ENCODE measurements at regions of chr7 and their contacts with region 1.

Region 1: DNA sequence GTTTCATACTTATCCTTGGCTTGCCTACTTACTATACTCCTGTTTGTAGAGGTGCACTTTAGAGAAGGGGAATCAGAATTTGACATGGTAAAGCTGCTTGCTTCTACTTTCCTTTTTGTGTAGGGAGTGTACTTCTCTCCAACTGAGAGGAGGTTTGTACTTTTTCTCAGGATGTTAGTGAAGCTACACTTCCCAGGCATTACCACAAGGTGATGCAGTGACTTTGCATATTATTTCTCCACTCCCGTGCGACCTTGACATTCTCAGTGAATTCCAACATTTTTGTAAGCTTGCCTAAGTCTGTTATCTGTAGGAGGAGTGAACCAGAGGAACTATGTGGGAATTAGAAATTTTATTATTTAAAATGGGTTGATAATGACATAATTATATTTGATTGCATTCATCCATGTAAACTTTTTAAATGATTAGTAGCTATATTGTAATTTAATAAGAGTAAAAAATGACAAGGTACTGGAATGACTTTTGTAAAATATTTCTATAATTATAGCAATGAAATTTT is 5.2 kb downstream of the TAX1BP1 start:
- DNase-seq: peak; percentile 47 to 82
- H3K4me3 ChIP-seq: peak overlapping the region; percentile 25
- H3K27ac ChIP-seq: peak overlapping the region; percentile 65
- H3K4me1 ChIP-seq: peaks cover 42% of the 10 kb centered on the region
- H3K27me3 ChIP-seq: no peaks in the 10 kb centered on the region
- CTCF ChIP-seq: peak; percentile 81

Region 2: DNA sequence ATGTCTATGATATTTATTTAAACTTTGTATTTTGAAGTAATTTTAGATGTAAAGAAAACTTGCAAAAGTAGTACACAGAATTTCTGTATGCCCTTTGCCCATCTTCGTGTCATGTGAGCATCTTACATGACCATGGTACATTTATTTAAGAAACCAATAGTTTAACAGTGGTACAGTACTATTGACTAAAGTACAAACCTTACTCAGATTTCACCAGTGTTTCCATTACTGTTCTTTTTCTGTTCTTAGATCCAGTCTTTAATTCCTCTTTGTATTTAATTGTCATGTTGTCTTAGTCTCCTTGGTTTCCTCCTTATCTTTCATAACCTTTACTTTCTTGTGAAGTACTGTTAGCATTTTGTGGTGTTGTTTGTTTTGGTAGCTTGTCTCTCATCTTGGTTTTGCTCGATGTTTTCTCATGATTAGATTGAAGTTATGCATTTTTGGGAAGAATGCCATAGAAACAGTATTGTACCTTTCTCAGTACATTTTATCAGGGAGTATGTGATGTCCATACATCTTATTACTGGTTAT is 18.9 kb after region 1 on chr7:
- CTCF ChIA-PET with region 1: no interaction called
- POLR2A ChIA-PET with region 1: no interaction called
- intact Hi-C with region 1: loop called (anchors 2 kb)
- DNase-seq: no peak
- H3K4me3 ChIP-seq: no peak overlapping the region
- H3K27ac ChIP-seq: no peak overlapping the region
- H3K4me1 ChIP-seq: peaks cover 17% of the 10 kb centered on the region; the same call in 1 of the 2 replicates
- H3K27me3 ChIP-seq: no peaks in the 10 kb centered on the region
- CTCF ChIP-seq: no peak

Region 3: GRCh38 chr7:27822245-27822644 is 77.1 kb after region 1 on chr7:
- CTCF ChIA-PET with region 1: no interaction called
- POLR2A ChIA-PET with region 1: no interaction called
- intact Hi-C with region 1: no loop called
- DNase-seq: no peak
- H3K4me3 ChIP-seq: no peak overlapping the region
- H3K27ac ChIP-seq: no peak overlapping the region
- H3K4me1 ChIP-seq: no peaks in the 10 kb centered on the region
- H3K27me3 ChIP-seq: no peaks in the 10 kb centered on the region
- CTCF ChIP-seq: no peak

Region 4: GRCh38 chr7:28052933-28053332 is 307.8 kb after region 1 on chr7:
- CTCF ChIA-PET with region 1: no interaction called
- POLR2A ChIA-PET with region 1: interaction called, 17 read pairs
- intact Hi-C with region 1: no loop called
- DNase-seq: no peak
- H3K4me3 ChIP-seq: no peak overlapping the region
- H3K27ac ChIP-seq: no peak overlapping the region
- H3K4me1 ChIP-seq: no peaks in the 10 kb centered on the region
- H3K27me3 ChIP-seq: no peaks in the 10 kb centered on the region
- CTCF ChIP-seq: no peak

Measured in PC-9 (cell line).